Lower leg skin (tissue), 4 donors: ENCODE measurements at regions of chr20 and their contacts with region 1.

Region 1: DNA sequence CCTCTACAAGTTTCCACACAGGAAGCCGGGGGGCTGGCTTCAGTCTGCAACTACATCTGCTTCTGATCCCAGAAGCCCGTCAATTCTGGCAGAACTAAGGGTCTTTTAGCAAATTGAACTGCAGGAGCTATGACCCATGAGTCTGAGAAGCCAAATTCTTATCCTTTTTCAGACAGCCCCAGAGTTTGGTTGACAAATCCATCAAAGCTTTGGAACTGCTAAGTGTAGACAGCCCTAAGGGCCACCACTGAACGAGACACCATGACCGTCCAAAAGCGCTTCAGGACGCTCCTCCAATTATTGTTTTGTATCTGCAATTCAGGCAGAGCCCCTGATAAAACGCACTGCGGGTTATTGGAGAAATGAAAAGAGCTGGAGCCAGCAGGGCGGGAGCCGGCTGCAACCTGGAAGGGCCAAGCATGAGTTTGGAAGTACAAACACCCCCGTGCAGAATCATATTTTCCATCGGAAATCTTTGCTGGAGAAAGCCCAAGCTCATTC is 67.1 kb downstream of the GNAS-AS1 start:
- DNase-seq: no peak
- H3K4me3 ChIP-seq: no peak overlapping the region
- CTCF ChIP-seq: no peak
- POLR2A ChIP-seq: no peak

Region 2: GRCh38 chr20:58623826-58624473 is 159.6 kb before region 1 on chr20:
- intact Hi-C with region 1: no loop called
- DNase-seq: no peak
- H3K4me3 ChIP-seq: no peak overlapping the region
- CTCF ChIP-seq: no peak
- POLR2A ChIP-seq: no peak

Region 3: GRCh38 chr20:58803533-58803932 is 20.0 kb after region 1 on chr20:
- intact Hi-C with region 1: loop called (anchors 1 kb)
- DNase-seq: no peak
- H3K4me3 ChIP-seq: no peak overlapping the region
- CTCF ChIP-seq: no peak
- POLR2A ChIP-seq: no peak